ENCODE measurements at regions of chr10 and their contacts with region 1.

Region 1: GRCh38 chr10:92965314-92965713 is 95.3 kb upstream of the CYP26C1 start:
- DNase-seq: no peak
- ATAC-seq: no peak
- H3K4me3 ChIP-seq: no peak overlapping the region
- H3K27ac ChIP-seq: no peak overlapping the region
- H3K4me1 ChIP-seq: peaks cover 0 to 2% of the 10 kb centered on the region in 2 donors
- H3K27me3 ChIP-seq: no peaks in the 10 kb centered on the region

Region 2: DNA sequence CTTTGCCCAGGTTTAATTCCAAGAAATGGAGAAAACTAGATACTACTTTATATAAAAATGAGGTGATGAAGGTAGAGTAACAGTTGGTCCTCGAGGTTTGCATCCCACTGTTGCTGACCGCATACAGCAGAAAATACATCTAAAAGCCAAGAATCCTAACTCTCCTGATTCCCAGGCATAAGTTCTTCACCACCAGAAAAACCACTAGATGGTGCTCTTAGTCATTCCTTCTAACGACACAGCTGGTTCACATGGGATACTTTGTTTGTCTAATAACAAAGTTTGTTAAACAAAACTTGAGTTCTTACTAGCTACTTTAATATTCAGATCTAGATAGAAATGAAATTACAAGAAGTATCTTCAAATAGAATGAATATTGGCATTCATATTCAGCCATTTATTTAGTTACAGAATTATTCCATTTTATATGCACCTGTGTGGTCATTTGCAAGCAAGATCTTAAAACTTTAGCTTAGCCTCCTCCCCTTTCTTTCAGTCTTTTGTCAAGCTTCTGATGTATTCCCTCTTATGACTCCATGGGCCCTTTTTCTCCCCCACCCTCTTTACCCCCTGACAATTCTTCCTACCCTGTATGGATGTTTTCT is 41.2 kb after region 1 on chr10:
- intact Hi-C with region 1: loop called in 1 of 2 experiments (anchors 5 kb)
- DNase-seq: no peak
- ATAC-seq: no peak
- H3K4me3 ChIP-seq: no peak overlapping the region
- H3K27ac ChIP-seq: no peak overlapping the region
- H3K4me1 ChIP-seq: no peaks in the 10 kb centered on the region
- H3K27me3 ChIP-seq: no peaks in the 10 kb centered on the region

Measured in aorta (tissue), 5 donors.